IMR-90 (cell line): ENCODE measurements at regions of chr7 and their contacts with region 1.

Region 1: GRCh38 chr7:83655951-83656556 is 7.1 kb upstream of the SEMA3E start:
- DNase-seq: peak; percentile 61
- ATAC-seq: peak; percentile 88
- H3K4me3 ChIP-seq: no peak overlapping the region
- H3K27ac ChIP-seq: no peak overlapping the region
- H3K4me1 ChIP-seq: no peaks in the 10 kb centered on the region
- H3K27me3 ChIP-seq: peaks cover 8% of the 10 kb centered on the region
- CTCF ChIP-seq: peak; percentile 91
- POLR2A ChIP-seq: 0 out of 2 replicates have a peak, but pooled peaks have one; percentile 25
- RAD21 ChIP-seq: peak; percentile 94

Region 2: DNA sequence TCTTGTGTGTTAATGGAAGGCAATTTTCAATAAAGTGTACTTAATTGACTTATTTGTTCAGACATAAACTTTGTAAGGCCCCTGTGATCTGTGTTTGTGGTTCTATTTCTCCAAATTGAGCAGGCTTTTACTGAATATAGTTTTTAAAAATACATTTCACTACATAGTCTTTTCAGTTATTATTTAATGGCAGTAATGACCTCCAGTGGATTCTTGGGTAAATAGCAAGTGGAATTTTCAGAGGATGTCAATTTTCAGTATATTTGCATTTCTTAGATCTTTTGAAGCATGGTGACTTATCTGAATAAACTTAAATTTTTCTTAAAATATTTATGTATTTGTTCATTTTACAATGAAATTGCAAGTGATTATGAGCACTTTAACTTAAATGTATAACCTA is 290.3 kb before region 1 on chr7:
- CTCF ChIA-PET with region 1: no interaction called
- POLR2A ChIA-PET with region 1: no interaction called
- dilution Hi-C with region 1: no loop called
- in situ Hi-C with region 1: no loop called
- intact Hi-C with region 1: loop called (anchors 1 kb)
- DNase-seq: no peak
- ATAC-seq: no peak
- H3K4me3 ChIP-seq: no peak overlapping the region
- H3K27ac ChIP-seq: no peak overlapping the region
- H3K4me1 ChIP-seq: no peaks in the 10 kb centered on the region
- H3K27me3 ChIP-seq: no peaks in the 10 kb centered on the region
- CTCF ChIP-seq: peak; percentile 20; the same call in 1 of the 2 replicates
- POLR2A ChIP-seq: no peak
- RAD21 ChIP-seq: no peak

Region 3: GRCh38 chr7:83410989-83411591 is 245.0 kb before region 1 on chr7:
- CTCF ChIA-PET with region 1: interaction called, 3 read pairs
- POLR2A ChIA-PET with region 1: no interaction called
- dilution Hi-C with region 1: no loop called
- in situ Hi-C with region 1: loop called (anchors 5 kb)
- intact Hi-C with region 1: loop called (anchors 1 kb)
- DNase-seq: peak; percentile 61
- ATAC-seq: peak; percentile 77
- H3K4me3 ChIP-seq: no peak overlapping the region
- H3K27ac ChIP-seq: no peak overlapping the region
- H3K4me1 ChIP-seq: no peaks in the 10 kb centered on the region
- H3K27me3 ChIP-seq: peaks cover 2% of the 10 kb centered on the region; the same call in 1 of the 2 replicates
- CTCF ChIP-seq: peak; percentile 78
- POLR2A ChIP-seq: no peak
- RAD21 ChIP-seq: peak; percentile 78

Region 4: GRCh38 chr7:84614821-84615505 is 958.9 kb after region 1 on chr7:
- CTCF ChIA-PET with region 1: no interaction called
- POLR2A ChIA-PET with region 1: no interaction called
- dilution Hi-C with region 1: no loop called
- in situ Hi-C with region 1: no loop called
- intact Hi-C with region 1: no loop called
- DNase-seq: no peak
- ATAC-seq: no peak
- H3K4me3 ChIP-seq: no peak overlapping the region
- H3K27ac ChIP-seq: no peak overlapping the region
- H3K4me1 ChIP-seq: no peaks in the 10 kb centered on the region
- H3K27me3 ChIP-seq: no peaks in the 10 kb centered on the region
- CTCF ChIP-seq: 0 out of 2 replicates have a peak, but pooled peaks have one; percentile 17
- POLR2A ChIP-seq: no peak
- RAD21 ChIP-seq: no peak